OCI-LY7 (cell line): ENCODE measurements at regions of chr11 and their contacts with region 1.

Region 1: DNA sequence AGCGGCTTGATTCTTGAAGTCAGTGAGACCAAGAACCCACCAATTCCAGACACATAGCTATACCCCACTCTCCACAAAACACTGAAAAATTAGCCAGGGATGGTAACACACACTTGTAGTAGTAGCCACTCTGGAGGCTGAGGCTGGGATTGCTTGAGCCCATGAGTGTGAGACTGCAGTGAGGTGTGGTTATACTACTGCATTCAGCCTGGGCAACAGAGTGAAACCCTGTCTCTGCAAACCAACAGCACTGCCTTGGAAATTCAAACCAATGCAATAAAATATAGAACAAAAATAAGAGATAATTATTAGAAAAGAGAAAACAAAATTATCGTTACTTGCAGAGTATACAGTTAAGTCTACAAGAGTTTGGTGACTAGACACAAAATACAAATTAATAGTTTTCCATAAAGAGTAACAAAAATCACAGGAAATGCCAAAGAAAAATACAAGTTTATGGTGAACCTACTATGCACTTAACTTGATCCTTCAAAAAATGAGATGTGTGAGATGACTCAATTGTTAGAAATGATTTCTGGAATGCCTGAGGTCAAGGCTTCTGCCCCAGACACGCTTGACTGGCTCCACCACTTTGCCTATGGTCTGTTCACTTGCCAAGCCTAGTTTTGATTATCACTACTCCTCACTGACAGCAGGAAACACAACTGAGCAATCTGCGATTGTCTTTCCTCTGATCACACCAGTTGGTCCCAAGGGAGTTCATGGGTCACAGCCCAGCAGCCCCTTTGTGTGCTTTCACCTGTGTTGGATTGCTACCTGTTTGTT is 20.4 kb upstream of the PRDM10 start:
- DNase-seq: peak; percentile 98
- H3K4me3 ChIP-seq: peak overlapping the region; percentile 49
- H3K27ac ChIP-seq: peak overlapping the region; percentile 76
- H3K4me1 ChIP-seq: peaks cover 75% of the 10 kb centered on the region
- CTCF ChIP-seq: no peak

Region 2: GRCh38 chr11:130008326-130008725 is 14.7 kb before region 1 on chr11:
- CTCF ChIA-PET with region 1: interaction called, 4 read pairs
- POLR2A ChIA-PET with region 1: interaction called, 12 read pairs
- intact Hi-C with region 1: loop called (anchors 1 kb)
- DNase-seq: no peak
- H3K4me3 ChIP-seq: no peak overlapping the region
- H3K27ac ChIP-seq: no peak overlapping the region
- H3K4me1 ChIP-seq: peaks cover 64% of the 10 kb centered on the region
- CTCF ChIP-seq: no peak